Activated CD4-positive, alpha-beta memory T cell treated with anti-CD3 and anti-CD28 coated beads for 36 hours (primary cell): ENCODE measurements at regions of chr17 and their contacts with region 1.

Region 1: DNA sequence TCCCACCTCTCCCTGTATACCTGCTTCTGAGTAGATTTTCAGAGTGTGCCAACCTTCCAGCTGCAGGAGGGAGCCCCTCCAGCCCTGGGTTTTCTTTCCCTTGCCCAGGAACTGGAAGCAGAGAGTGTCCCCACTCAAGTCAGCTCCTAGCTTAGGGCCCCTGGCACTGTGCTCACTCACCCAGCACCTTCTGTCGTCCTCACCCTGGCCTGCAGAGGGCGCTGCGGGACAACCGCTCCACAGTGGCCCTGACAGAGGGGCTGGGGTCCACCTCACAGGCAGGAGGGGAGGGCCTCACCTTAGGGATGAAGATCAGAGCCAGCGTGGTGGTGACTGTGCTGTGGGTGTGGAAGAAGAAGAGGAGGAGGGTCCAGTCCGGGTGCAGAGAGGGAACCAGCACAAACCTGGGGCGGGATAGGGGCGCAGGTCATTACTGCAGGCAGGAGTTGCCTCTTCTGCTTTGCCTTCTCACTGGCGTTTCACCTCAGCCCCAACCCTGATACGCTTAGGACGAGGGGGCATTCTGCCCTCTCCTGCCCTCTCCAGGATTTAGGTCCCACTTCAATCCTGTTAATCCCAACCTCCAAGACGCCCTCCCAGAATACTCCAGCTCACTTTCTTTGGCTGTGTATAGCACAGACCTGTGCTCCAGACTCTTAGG is 10.0 kb downstream of the GPR179 start:
- DNase-seq: peak; percentile 72
- H3K4me3 Mint-ChIP-seq: no peak overlapping the region
- H3K27ac Mint-ChIP-seq: no peak overlapping the region
- H3K4me1 Mint-ChIP-seq: no peaks in the 10 kb centered on the region
- H3K27me3 Mint-ChIP-seq: peaks cover 7% of the 10 kb centered on the region

Region 2: GRCh38 chr17:38322091-38322779 is 11.5 kb before region 1 on chr17:
- CTCF ChIA-PET with region 1: interaction called, 11 read pairs
- POLR2A ChIA-PET with region 1: interaction called, 3 read pairs
- intact Hi-C with region 1: no loop called
- DNase-seq: peak; percentile 76
- H3K4me3 Mint-ChIP-seq: no peak overlapping the region
- H3K27ac Mint-ChIP-seq: no peak overlapping the region
- H3K4me1 Mint-ChIP-seq: no peaks in the 10 kb centered on the region
- H3K27me3 Mint-ChIP-seq: no peaks in the 10 kb centered on the region

Region 3: GRCh38 chr17:38402897-38403296 is 69.1 kb after region 1 on chr17:
- CTCF ChIA-PET with region 1: no interaction called
- POLR2A ChIA-PET with region 1: no interaction called
- intact Hi-C with region 1: no loop called
- DNase-seq: no peak
- H3K4me3 Mint-ChIP-seq: no peak overlapping the region
- H3K27ac Mint-ChIP-seq: no peak overlapping the region
- H3K4me1 Mint-ChIP-seq: no peaks in the 10 kb centered on the region
- H3K27me3 Mint-ChIP-seq: no peaks in the 10 kb centered on the region

Region 4: DNA sequence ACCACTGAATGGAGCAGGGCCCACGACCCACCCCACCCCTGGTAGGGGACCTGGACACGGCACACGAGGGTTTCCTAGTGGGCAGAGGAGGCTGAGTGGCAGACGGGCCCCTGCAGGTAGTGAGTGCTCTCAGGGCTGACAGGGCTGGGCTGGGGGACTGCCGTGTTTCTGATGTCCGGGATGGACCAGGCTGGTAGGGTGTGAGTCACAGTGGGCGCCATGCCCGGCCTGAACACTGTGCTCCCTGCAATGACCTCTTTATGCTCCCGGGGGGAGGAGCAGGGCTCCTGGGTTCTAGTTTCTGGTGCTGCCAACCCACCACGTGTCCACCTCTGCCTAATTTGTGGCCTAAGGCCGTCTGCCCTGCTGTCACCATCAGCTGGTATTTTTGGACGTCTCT is 120.8 kb after region 1 on chr17:
- CTCF ChIA-PET with region 1: no interaction called
- POLR2A ChIA-PET with region 1: no interaction called
- intact Hi-C with region 1: no loop called
- DNase-seq: no peak
- H3K4me3 Mint-ChIP-seq: no peak overlapping the region
- H3K27ac Mint-ChIP-seq: no peak overlapping the region
- H3K4me1 Mint-ChIP-seq: peaks cover 11% of the 10 kb centered on the region
- H3K27me3 Mint-ChIP-seq: peaks cover 31% of the 10 kb centered on the region

Region 5: DNA sequence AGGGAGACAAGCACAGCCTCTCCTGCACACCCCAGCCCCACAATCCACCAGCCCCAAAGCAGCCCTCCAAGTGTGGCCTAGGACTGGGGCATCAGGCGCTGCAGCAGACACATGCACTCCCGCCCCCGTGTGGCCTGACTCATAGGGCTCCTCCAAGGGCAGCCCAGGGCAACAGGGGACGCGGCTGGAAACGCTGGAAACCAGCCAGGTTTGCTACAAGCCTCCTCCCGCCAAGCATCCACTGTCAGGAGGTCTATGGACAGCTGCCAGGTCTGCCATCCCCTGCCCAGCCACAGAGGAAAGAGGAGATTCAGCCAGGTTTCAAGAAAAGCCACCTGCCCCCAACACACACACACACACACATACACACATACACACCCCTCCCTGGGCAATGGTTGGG is 246.2 kb after region 1 on chr17:
- CTCF ChIA-PET with region 1: no interaction called
- POLR2A ChIA-PET with region 1: no interaction called
- intact Hi-C with region 1: no loop called
- DNase-seq: peak; percentile 48
- H3K4me3 Mint-ChIP-seq: no peak overlapping the region
- H3K27ac Mint-ChIP-seq: no peak overlapping the region
- H3K4me1 Mint-ChIP-seq: peaks cover 6% of the 10 kb centered on the region
- H3K27me3 Mint-ChIP-seq: peaks cover 66% of the 10 kb centered on the region